Breast epithelium (tissue), 4 donors: ENCODE measurements at regions of chr3 and their contacts with region 1.

Region 1: DNA sequence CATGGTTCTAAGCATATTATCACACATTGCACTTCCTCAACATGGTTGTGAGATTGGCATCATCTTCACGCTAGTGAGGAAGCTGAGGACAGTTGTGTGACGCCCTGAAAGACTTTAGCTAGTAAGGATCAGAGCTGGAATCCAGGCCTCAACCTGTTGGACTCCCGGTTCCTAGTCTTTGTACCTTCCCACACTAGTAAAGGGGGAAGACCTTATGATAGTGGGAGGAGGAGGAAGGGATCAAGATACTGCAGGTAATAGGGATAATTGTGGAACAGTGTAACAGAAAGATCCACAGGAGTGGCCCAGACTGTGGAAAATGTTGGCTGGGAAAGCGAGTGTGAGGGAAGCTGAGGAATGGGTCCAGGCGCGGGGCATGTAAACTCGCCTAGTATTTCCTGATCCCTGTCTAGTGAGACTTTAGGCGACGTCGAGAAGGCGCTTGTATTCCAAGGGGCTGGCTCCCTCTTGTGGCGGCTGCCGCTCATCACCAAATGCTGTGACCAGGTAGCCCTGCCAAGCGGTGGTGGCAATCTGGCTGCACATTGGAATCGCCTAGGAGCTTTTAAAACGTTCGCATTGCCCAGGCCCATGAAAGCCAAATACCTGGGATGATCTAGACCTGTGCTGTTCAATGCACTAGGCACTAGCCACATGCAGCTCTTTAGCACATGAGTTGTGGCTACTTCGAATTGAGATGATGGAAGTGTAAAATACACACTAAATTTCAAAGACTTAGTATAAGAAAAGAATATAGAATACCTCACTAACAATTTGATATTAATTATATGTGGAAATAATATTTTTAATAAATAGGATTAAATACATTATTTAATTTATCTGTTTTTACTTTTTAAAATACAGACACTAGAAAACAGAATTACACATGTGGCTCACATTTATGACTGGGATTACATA is 38.8 kb upstream of the CLDN18 start:
- DNase-seq: peak; percentile 45 to 76
- H3K4me3 ChIP-seq: peak overlapping the region in 1 of 3 donors; percentile 26
- H3K27ac ChIP-seq: no peak overlapping the region
- H3K4me1 ChIP-seq: no peaks in the 10 kb centered on the region
- H3K27me3 ChIP-seq: no peaks in the 10 kb centered on the region
- CTCF ChIP-seq: peak; percentile 26 to 68 (median 61)
- POLR2A ChIP-seq: no peak

Region 2: GRCh38 chr3:137647179-137647578 is 324.0 kb before region 1 on chr3:
- intact Hi-C with region 1: loop called (anchors 10 kb)
- DNase-seq: no peak
- H3K4me3 ChIP-seq: no peak overlapping the region
- H3K27ac ChIP-seq: no peak overlapping the region
- H3K4me1 ChIP-seq: no peaks in the 10 kb centered on the region
- H3K27me3 ChIP-seq: peaks cover 0 to 9% of the 10 kb centered on the region in 2 donors
- CTCF ChIP-seq: no peak
- POLR2A ChIP-seq: no peak

Region 3: GRCh38 chr3:139238281-139239030 is 1267.3 kb after region 1 on chr3:
- intact Hi-C with region 1: no loop called
- DNase-seq: no peak
- H3K4me3 ChIP-seq: peak overlapping the region in 2 of 3 donors; percentile 3 to 22
- H3K27ac ChIP-seq: no peak overlapping the region
- H3K4me1 ChIP-seq: no peaks in the 10 kb centered on the region
- H3K27me3 ChIP-seq: no peaks in the 10 kb centered on the region
- CTCF ChIP-seq: no peak
- POLR2A ChIP-seq: no peak